Activated CD4-positive, alpha-beta memory T cell treated with anti-CD3 and anti-CD28 coated beads for 36 hours (primary cell): ENCODE measurements at regions of chr14 and their contacts with region 1.

Region 1: DNA sequence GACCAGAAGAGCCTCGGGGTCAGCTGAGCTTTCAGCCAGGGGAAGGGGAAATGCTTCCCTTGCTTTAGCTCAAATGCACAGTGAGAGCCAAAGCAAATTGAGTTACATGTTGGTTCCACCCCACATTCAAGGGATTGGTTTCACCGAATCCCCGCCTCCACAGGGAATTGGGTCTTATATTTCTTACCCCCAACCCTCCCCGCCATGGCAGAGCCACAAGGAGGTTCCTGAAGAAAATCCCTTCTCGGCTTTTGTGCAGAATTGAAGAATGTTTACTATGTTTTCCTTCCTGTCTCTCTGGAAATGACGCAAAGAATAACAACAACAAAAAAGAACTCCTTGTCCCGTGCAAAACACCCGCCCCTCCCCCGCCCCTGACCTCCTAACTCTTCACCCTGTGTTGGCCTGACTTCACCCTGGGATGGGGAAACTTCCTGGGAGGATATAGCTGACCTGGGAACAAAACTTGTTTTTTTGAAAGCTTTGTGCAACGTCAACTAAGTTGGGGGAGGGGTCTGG is 21.9 kb upstream of the CIPC start:
- DNase-seq: no peak
- H3K4me3 Mint-ChIP-seq: no peak overlapping the region
- H3K27ac Mint-ChIP-seq: no peak overlapping the region
- H3K4me1 Mint-ChIP-seq: no peaks in the 10 kb centered on the region
- H3K27me3 Mint-ChIP-seq: peaks cover under 1% of the 10 kb centered on the region

Region 2: DNA sequence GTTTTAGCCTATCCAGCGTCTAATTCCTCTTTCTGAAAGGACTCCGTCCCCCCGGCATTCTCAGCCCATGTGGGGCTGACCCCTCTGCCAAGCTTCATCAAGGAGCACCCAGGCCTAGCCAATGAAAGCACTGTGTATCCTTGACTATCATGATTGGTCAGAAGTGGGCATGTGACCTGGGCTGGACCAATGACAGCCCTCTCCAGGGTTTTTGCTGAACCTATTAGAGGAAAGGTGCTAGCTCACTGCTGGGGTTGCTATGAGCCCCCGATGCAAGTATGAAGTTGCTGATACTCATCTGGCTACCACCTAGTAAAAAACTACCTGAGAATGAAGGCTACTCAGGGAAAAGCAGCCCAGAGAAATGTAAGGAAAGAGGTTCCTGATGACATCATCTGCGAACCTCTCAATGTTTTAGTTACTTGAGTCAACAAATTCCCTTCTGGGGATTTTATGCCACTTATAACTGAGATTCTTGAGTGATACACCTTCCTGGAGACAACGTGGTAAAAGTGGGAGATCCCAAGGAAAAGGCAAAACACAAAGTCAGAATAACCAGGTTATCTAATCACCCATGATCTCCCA is 181.8 kb before region 1 on chr14:
- CTCF ChIA-PET with region 1: interaction called, 15 read pairs
- POLR2A ChIA-PET with region 1: no interaction called
- intact Hi-C with region 1: no loop called
- DNase-seq: no peak
- H3K4me3 Mint-ChIP-seq: no peak overlapping the region
- H3K27ac Mint-ChIP-seq: no peak overlapping the region
- H3K4me1 Mint-ChIP-seq: no peaks in the 10 kb centered on the region
- H3K27me3 Mint-ChIP-seq: no peaks in the 10 kb centered on the region

Region 3: GRCh38 chr14:76904740-76905438 is 171.3 kb before region 1 on chr14:
- CTCF ChIA-PET with region 1: interaction called, 146 read pairs
- POLR2A ChIA-PET with region 1: interaction called, 4 read pairs
- intact Hi-C with region 1: no loop called
- DNase-seq: peak; percentile 93
- H3K4me3 Mint-ChIP-seq: peak overlapping the region; percentile 14
- H3K27ac Mint-ChIP-seq: peak overlapping the region; percentile 70
- H3K4me1 Mint-ChIP-seq: peaks cover 28% of the 10 kb centered on the region
- H3K27me3 Mint-ChIP-seq: no peaks in the 10 kb centered on the region

Region 4: GRCh38 chr14:76947078-76947837 is 128.9 kb before region 1 on chr14:
- CTCF ChIA-PET with region 1: interaction called, 12 read pairs
- POLR2A ChIA-PET with region 1: no interaction called
- intact Hi-C with region 1: no loop called
- DNase-seq: peak; percentile 91
- H3K4me3 Mint-ChIP-seq: peak overlapping the region; percentile 29
- H3K27ac Mint-ChIP-seq: peak overlapping the region; percentile 23
- H3K4me1 Mint-ChIP-seq: peaks cover 43% of the 10 kb centered on the region
- H3K27me3 Mint-ChIP-seq: no peaks in the 10 kb centered on the region